ENCODE measurements at regions of chr1 and their contacts with region 1.

Region 1: GRCh38 chr1:212566522-212567479 is 41.8 kb upstream of the ATF3 start:
- DNase-seq: peak; percentile 57
- H3K4me3 Mint-ChIP-seq: peak overlapping the region; percentile 85
- H3K27ac Mint-ChIP-seq: peak overlapping the region; percentile 94
- H3K4me1 Mint-ChIP-seq: peaks cover 32% of the 10 kb centered on the region
- H3K27me3 Mint-ChIP-seq: peaks cover 20% of the 10 kb centered on the region

Region 2: GRCh38 chr1:211939876-211940468 is 626.8 kb before region 1 on chr1:
- intact Hi-C with region 1: loop called (anchors 2 kb)
- DNase-seq: peak; percentile 33
- H3K4me3 Mint-ChIP-seq: no peak overlapping the region
- H3K27ac Mint-ChIP-seq: peak overlapping the region; percentile 2
- H3K4me1 Mint-ChIP-seq: peaks cover 47% of the 10 kb centered on the region
- H3K27me3 Mint-ChIP-seq: no peaks in the 10 kb centered on the region

Region 3: DNA sequence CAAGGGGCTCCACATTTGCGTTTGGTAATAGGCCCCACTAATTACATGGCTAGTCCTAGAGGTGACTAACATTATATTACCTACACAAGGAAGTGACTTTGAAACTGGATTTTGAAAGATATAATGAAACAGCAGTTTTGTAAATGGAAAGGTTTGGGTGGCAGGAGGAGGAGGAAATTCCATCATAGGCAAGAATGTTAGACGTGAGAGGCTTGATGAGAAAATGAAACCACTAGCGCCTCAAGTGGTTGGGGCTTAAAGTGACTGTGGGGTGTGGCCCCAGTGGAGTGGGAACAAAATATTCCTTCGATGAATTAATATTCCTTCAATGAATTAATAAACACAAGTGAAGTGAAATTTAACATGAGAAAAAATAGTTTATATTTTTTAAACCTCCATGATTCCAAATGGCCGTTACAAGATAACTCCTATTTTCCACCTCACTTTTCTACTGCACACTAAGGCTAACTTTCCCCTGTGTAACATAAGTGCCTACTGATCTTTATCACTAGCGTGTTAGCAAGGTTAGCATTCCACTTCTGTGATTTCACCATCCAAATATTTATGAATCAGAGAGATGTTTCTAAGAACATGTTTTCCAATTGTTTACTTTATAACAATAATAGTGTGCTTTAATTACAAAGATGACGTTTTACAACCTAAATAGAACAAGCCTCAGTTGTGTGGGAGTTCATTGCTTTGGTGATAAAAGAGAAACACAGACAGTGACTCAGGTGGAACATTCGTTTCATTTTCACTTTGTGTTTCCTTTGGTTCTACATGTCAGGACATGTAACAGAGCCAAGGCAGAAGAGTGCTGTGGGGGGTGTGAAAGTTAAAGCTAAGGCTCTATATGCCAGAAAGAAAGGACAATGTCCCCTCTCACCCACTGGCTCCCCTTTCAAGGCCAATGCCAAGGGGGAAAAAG is 29.2 kb after region 1 on chr1:
- intact Hi-C with region 1: loop called (anchors 1 kb)
- DNase-seq: peak; percentile 64
- H3K4me3 Mint-ChIP-seq: peak overlapping the region; percentile 68
- H3K27ac Mint-ChIP-seq: peak overlapping the region; percentile 96
- H3K4me1 Mint-ChIP-seq: peaks cover 27% of the 10 kb centered on the region
- H3K27me3 Mint-ChIP-seq: peaks cover 10% of the 10 kb centered on the region

Region 4: GRCh38 chr1:212721388-212722247 is 154.8 kb after region 1 on chr1:
- intact Hi-C with region 1: loop called (anchors 2 kb)
- DNase-seq: peak; percentile 39
- H3K4me3 Mint-ChIP-seq: peak overlapping the region; percentile 34
- H3K27ac Mint-ChIP-seq: peak overlapping the region; percentile 82
- H3K4me1 Mint-ChIP-seq: peaks cover 44% of the 10 kb centered on the region
- H3K27me3 Mint-ChIP-seq: peaks cover 6% of the 10 kb centered on the region

Region 5: DNA sequence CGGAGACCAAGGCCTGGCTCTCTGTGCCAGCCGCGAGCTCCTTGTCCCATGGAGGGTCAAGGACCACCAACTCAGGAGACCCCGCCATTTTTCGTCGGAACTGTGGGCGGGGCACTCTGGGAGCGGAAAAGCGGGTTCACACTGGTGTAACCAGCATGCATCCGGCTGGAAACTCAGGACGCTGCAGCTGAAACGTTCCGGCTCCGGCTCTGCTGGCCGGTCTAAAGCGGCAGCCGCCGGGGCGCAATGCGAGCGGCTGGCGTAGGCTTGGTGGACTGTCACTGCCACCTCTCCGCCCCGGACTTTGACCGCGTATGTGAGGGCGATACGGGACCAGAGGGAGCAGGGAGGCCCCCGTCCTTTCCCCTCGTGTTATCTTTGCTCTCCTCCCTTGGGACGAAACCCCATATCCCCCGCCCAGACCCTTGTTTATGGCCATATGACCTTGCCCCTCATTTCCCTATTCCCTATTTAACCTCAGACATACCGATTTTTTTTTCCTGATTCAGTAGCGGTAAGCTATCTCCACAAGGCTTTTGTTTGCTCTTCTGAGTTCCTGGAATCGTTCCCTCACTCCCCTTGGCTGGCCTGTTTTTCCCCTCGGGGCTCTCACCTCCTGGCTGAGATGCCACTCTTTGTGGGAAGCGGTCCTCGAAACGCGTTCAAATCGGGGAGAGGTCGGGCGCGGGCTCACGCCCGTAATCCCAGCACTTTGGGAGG is 225.0 kb after region 1 on chr1 and contains the starts of genes NSL1 and TATDN3:
- intact Hi-C with region 1: loop called (anchors 5 kb)
- DNase-seq: peak; percentile 93
- H3K4me3 Mint-ChIP-seq: peak within 1 kb of the TSS; percentile 99
- H3K27ac Mint-ChIP-seq: peak within 1 kb of the TSS; percentile 98
- H3K4me1 Mint-ChIP-seq: peaks cover 30% of the 10 kb centered on the region
- H3K27me3 Mint-ChIP-seq: no peaks in the 10 kb centered on the region
- total RNA-seq, gene NSL1: 40.2 and 44.7 TPM in 2 replicates
- total RNA-seq, gene TATDN3: 14.4 and 18.5 TPM in 2 replicates

Region 6: DNA sequence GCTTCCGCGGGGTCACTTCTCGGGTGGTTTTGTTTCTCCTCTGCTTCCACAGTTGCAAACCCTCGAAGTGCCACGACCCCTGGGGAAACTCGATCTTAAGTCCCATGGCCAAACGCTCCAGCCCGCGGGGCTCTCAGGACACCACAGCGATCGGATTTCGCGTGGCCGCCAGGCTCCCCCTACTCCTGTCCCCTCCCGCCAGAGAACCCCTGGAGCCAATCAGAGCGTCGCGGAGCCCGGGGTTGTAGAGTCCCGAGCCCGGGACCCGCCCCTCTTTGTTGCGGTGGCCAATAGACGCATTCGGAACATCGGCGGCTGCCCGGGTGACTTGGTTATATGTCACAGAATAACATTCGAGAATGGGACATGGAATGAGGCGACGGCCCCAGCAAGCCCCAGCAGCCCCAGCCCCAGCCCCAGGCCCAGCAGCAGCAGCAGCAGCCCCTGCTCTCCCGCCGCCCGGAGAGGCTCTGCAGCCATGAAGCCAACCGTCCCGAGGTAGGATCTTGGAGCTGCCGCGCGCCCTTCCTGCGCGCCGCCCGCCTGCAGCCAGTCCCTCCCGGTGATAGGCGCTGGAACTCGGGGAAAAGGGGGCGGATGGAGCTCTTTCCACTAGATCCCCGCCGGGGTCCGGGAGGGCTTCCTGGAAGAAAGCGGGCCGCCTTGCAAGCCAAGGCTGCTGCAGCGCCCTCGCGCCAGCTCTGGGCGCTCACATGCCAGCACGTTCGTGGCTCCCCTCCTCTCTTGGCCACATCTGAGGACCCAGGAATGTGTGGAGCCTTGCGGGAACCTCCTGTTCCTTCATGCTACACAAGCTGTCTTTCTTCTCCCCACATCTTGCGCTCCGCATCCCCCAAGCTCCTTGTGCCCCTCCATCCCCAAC is 383.7 kb after region 1 on chr1 and contains the start of gene VASH2:
- intact Hi-C with region 1: loop called (anchors 5 kb)
- DNase-seq: peak; percentile 61
- H3K4me3 Mint-ChIP-seq: peak within 1 kb of the TSS; percentile 82
- H3K27ac Mint-ChIP-seq: no peak within 1 kb of the TSS
- H3K4me1 Mint-ChIP-seq: peaks cover 6% of the 10 kb centered on the region
- H3K27me3 Mint-ChIP-seq: peaks cover 52% of the 10 kb centered on the region
- total RNA-seq, gene VASH2: 0.10 and 0.39 TPM in 2 replicates

Measured in activated T-helper 1 cell treated with anti-CD3 and anti-CD28 coated beads, Interleukin-12 subunit alpha, Interleukin-12 subunit beta, Interleukin-2, Interleukin-4 antibody, amounts not matched to agents 30 ng/mL and 10 ng/mL and 1 ng/mL, durations not matched to agents 14 hours and 24 hours and 36 hours (primary cell).